GM13977 (cell line): ENCODE measurements at regions of chr19 and their contacts with region 1.

Region 1: GRCh38 chr19:16160943-16161560 is 12.3 kb downstream of the CIB3 start:
- DNase-seq: no peak
- CTCF ChIP-seq: no peak

Region 2: GRCh38 chr19:15836595-15837337 is 324.3 kb before region 1 on chr19:
- in situ Hi-C with region 1: loop called (anchors 25 kb)
- DNase-seq: peak; percentile 93
- CTCF ChIP-seq: no peak